IMR-90 (cell line): ENCODE measurements at regions of chr11 and their contacts with region 1.

Region 1: DNA sequence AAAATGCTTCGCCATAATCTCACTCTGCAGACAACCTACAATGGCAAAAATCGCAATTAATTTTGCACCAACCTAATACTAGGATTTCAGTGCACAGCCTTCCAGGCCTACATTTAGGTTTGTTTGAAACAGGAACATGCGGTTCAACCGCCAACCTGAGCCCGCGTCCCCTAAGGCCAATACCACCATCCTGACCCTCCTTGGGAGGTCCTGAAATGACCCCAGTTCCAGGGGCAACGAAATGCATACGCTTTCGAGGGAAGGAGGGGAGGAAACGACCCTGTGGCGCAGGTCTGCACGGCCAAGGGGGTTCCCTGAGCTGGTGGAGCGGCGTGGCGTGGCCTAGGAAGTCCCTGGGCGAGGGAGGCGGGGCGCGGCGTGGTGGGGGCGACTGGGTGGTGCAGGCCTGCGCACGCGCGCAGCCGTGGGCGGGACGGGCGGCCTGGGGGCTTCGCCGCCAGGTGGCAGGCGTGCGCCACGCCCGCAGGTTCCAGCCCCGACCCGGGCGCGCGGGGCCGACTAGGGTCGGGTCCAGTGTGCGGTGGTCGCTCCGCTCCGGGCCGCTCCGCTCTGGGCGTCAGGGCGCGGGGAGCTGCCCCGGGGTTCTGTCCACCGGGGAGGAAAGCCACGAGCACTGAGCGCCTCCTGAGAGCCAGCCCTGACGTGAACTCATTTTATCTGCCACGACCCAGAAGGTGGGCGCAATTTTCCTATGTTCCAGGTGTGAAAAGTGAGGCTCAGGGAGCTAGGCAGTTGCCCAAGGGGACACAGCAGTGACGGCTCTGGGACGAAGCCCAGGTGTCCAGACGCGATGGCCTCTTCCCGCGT is 94.1 kb downstream of the SWAP70 start:
- DNase-seq: peak; percentile 72
- ATAC-seq: peak; percentile 43
- H3K4me3 ChIP-seq: peak overlapping the region; percentile 32
- H3K27ac ChIP-seq: peak overlapping the region; percentile 96
- H3K4me1 ChIP-seq: peaks cover 48% of the 10 kb centered on the region
- H3K27me3 ChIP-seq: no peaks in the 10 kb centered on the region
- CTCF ChIP-seq: peak; percentile 86
- POLR2A ChIP-seq: no peak
- RAD21 ChIP-seq: peak; percentile 86

Region 2: DNA sequence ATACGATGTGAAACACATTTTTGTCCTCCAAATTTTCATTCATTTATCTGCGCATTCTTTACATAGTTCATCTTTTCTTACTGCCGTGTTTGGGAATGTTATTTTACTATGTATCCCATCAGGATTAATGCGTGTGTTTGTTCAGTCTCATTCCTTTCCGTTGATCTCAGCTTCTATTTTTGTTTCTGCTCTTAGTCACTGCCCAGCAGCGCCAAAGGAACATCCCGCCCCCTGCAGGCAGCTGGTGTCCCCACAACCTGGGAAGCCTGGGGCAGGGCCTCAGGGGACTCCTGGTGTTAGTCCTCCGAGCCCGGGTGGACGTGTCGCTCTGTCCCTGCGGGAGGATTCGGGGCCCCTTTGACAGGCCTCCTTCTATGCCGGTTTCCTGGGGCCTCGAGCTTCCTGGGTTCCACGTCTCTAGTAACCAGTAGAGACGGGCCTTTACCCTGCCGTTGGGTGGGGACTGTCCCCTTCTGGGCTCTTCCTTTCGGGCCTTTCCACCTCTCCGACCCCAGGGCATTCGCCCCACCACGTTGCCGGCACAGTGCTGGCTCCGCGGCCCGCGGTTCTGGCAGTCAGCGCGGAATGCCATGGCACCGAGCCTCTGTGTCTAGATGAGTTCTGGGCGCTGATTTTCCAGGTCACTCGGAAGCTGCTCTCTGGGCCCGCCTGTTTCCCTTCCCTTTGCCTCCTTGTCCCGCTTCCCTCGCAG is 144.7 kb before region 1 on chr11:
- CTCF ChIA-PET with region 1: no interaction called
- POLR2A ChIA-PET with region 1: no interaction called
- dilution Hi-C with region 1: no loop called
- in situ Hi-C with region 1: no loop called
- intact Hi-C with region 1: no loop called
- DNase-seq: peak; percentile 98
- ATAC-seq: peak; percentile 83
- H3K4me3 ChIP-seq: peak overlapping the region; percentile 7; the same call in 1 of the 2 replicates
- H3K27ac ChIP-seq: peak overlapping the region; percentile 91
- H3K4me1 ChIP-seq: peaks cover 16% of the 10 kb centered on the region
- H3K27me3 ChIP-seq: no peaks in the 10 kb centered on the region
- CTCF ChIP-seq: peak; percentile 98
- POLR2A ChIP-seq: peak; percentile 75
- RAD21 ChIP-seq: peak; percentile 79

Region 3: GRCh38 chr11:9838229-9838628 is 80.2 kb after region 1 on chr11:
- CTCF ChIA-PET with region 1: no interaction called
- POLR2A ChIA-PET with region 1: no interaction called
- dilution Hi-C with region 1: no loop called
- in situ Hi-C with region 1: no loop called
- intact Hi-C with region 1: no loop called
- DNase-seq: no peak
- ATAC-seq: no peak
- H3K4me3 ChIP-seq: no peak overlapping the region
- H3K27ac ChIP-seq: no peak overlapping the region
- H3K4me1 ChIP-seq: 0 out of 2 replicates have a peak, but pooled peaks cover 2% of the 10 kb centered on the region
- H3K27me3 ChIP-seq: no peaks in the 10 kb centered on the region
- CTCF ChIP-seq: no peak
- POLR2A ChIP-seq: no peak
- RAD21 ChIP-seq: no peak

Region 4: GRCh38 chr11:9861860-9862725 is 104.1 kb after region 1 on chr11:
- CTCF ChIA-PET with region 1: interaction called, 4 read pairs
- POLR2A ChIA-PET with region 1: no interaction called
- dilution Hi-C with region 1: no loop called
- in situ Hi-C with region 1: no loop called
- intact Hi-C with region 1: loop called (anchors 1 kb)
- DNase-seq: peak; percentile 75
- ATAC-seq: peak; percentile 74
- H3K4me3 ChIP-seq: no peak overlapping the region
- H3K27ac ChIP-seq: peak overlapping the region; percentile 34; the same call in 1 of the 2 replicates
- H3K4me1 ChIP-seq: peaks cover 9% of the 10 kb centered on the region
- H3K27me3 ChIP-seq: no peaks in the 10 kb centered on the region
- CTCF ChIP-seq: peak; percentile 75
- POLR2A ChIP-seq: no peak
- RAD21 ChIP-seq: peak; percentile 77

Region 5: DNA sequence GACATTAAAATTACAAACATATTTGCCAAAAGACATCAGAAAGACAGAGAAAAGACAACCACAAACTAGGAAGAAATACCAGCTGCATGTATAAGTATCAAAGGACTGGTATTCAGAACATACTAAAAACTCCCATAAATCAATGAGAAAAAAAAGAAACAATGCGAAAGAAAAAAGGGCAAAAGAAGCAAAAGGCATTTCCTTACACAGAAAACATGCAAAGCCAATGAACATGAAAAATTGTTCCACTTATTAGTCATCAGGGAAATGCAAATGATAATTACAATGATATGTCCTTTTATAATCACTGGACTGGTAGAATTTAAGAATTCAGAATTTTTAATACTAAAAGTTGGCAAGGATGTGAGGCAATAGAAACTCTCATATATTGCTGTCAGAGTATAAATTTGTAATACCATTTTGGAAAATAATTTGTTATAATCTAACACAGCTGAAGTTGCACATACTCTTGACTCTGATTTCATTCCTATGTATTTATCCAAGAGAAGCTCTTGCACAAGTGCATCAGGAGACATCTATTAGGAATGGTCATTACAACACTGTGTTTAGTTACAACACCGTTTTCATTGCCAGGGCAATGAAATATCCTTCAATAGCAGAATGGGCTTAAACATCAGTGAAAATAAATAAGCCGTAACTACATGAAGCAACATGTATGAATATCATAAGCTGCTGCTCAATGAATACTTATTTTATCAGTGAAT is 185.5 kb after region 1 on chr11:
- CTCF ChIA-PET with region 1: interaction called, 3 read pairs
- POLR2A ChIA-PET with region 1: no interaction called
- dilution Hi-C with region 1: no loop called
- in situ Hi-C with region 1: no loop called
- intact Hi-C with region 1: loop called (anchors 1 kb)
- DNase-seq: peak; percentile 97
- ATAC-seq: peak; percentile 80
- H3K4me3 ChIP-seq: no peak overlapping the region
- H3K27ac ChIP-seq: peak overlapping the region; percentile 91; the same call in 1 of the 2 replicates
- H3K4me1 ChIP-seq: peaks cover 6% of the 10 kb centered on the region
- H3K27me3 ChIP-seq: no peaks in the 10 kb centered on the region
- CTCF ChIP-seq: no peak
- POLR2A ChIP-seq: no peak
- RAD21 ChIP-seq: no peak

Region 6: GRCh38 chr11:10122326-10123197 is 364.5 kb after region 1 on chr11:
- CTCF ChIA-PET with region 1: no interaction called
- POLR2A ChIA-PET with region 1: no interaction called
- dilution Hi-C with region 1: no loop called
- in situ Hi-C with region 1: no loop called
- intact Hi-C with region 1: loop called (anchors 10 kb)
- DNase-seq: peak; percentile 57
- ATAC-seq: peak; percentile 27
- H3K4me3 ChIP-seq: no peak overlapping the region
- H3K27ac ChIP-seq: no peak overlapping the region
- H3K4me1 ChIP-seq: peaks cover 3% of the 10 kb centered on the region; the same call in 1 of the 2 replicates
- H3K27me3 ChIP-seq: no peaks in the 10 kb centered on the region
- CTCF ChIP-seq: no peak
- POLR2A ChIP-seq: no peak
- RAD21 ChIP-seq: no peak

Region 7: GRCh38 chr11:10322830-10323792 is 565.1 kb after region 1 on chr11:
- CTCF ChIA-PET with region 1: no interaction called
- POLR2A ChIA-PET with region 1: interaction called, 3 read pairs
- dilution Hi-C with region 1: no loop called
- in situ Hi-C with region 1: loop called (anchors 5 kb)
- intact Hi-C with region 1: loop called (anchors 1 kb)
- DNase-seq: peak; percentile 93
- ATAC-seq: peak; percentile 50
- H3K4me3 ChIP-seq: no peak overlapping the region
- H3K27ac ChIP-seq: peak overlapping the region; percentile 48; the same call in 1 of the 2 replicates
- H3K4me1 ChIP-seq: peaks cover 38% of the 10 kb centered on the region
- H3K27me3 ChIP-seq: no peaks in the 10 kb centered on the region
- CTCF ChIP-seq: peak; percentile 68
- POLR2A ChIP-seq: no peak
- RAD21 ChIP-seq: peak; percentile 67